GM12878 (cell line): ENCODE measurements at regions of chr11 and their contacts with region 1.

Region 1: DNA sequence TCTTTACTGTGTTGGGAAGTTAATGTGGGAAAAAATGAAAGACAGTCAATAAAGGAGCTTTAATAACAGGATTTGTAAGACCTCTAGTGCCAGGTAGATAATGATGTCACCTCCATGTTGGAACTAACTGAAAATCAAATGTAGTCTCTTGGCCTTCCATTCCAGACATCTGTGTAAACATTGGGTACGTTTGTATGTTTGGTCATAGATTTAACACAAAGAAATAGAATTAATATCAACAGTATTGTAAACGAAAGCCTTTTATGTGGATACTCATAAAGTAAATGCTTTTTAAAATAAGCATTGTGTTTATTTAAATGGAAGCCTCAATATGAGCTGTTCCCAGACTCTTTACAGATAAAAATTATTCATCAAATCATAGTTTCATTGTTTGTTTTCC is 605.7 kb downstream of the METTL15 start:
- DNase-seq: no peak
- ATAC-seq: no peak
- H3K4me3 ChIP-seq: no peak overlapping the region
- H3K27ac ChIP-seq: no peak overlapping the region
- H3K4me1 ChIP-seq: no peaks in the 10 kb centered on the region
- H3K27me3 ChIP-seq: no peaks in the 10 kb centered on the region
- CTCF ChIP-seq: no peak
- EP300 ChIP-seq: no peak
- POLR2A ChIP-seq: no peak
- RAD21 ChIP-seq: no peak

Region 2: DNA sequence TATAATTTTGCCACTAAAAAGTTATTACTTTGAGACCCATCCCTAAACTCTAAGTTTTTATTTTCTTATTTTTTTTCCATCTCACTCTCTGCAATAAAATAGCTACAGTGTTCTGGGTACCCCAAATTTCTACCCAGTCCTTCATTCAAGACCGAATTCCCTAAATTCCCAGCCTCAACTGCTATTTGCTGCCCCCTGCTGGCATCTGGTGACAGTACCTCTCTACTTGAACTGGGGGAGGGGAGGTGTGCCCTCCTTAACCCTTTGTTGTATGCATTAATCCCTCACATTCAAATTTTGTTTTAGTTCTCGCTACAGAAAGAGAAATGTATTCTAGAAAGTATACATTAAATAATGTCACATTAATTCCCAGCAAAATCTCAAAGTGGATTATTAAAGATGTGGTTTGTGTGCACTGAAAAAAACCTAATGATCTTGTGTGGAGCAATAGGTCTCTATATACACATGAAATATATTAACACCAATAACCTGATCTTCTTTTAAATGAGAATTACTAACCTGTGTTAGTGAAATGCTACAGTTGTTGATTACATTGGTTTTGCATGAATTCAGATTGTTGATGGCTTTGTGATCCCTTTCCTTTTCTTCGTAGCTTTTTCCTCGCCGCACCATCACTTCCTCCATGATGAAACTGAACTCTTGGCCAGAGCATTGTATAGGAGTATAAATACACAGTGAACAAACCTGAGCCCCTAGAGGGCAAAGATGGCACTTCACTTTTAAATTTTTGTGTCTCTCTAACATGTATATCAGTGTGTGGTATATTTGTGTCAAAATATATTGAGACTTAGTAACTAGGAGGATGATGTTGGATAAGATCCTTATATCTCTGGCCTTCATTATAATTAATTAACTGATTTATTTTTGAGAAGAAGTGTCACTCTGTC is 15.7 kb before region 1 on chr11:
- CTCF ChIA-PET with region 1: interaction called, 13 read pairs
- POLR2A ChIA-PET with region 1: no interaction called
- RAD21 ChIA-PET with region 1: no interaction called
- SMC1A ChIA-PET with region 1: no interaction called
- in situ Hi-C with region 1: no loop called
- intact Hi-C with region 1: no loop called
- DNase-seq: no peak
- ATAC-seq: peak; percentile 80
- H3K4me3 ChIP-seq: no peak overlapping the region
- H3K27ac ChIP-seq: no peak overlapping the region
- H3K4me1 ChIP-seq: no peaks in the 10 kb centered on the region
- H3K27me3 ChIP-seq: no peaks in the 10 kb centered on the region
- CTCF ChIP-seq: peak; percentile 78 to 85 (median 82)
- EP300 ChIP-seq: no peak
- POLR2A ChIP-seq: no peak
- RAD21 ChIP-seq: peak; percentile 72

Region 3: DNA sequence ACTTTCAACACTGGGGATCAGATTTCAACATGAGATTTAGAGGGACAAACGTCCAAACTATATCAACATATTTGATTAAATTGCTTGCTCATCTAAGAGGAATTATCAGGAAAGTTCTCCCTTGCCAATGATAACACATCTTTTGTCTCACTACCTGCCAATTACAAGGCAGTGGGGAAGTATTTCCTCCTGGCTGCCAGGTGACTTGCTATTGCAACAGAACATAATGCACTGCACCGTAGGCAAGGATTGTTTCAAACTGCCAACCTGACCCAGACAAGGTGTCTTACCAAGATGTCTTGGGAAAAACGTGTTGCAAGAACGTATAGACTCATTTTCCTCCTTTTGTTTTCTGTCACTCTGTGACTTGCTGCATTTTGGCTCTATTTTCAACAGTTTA is 105.9 kb after region 1 on chr11:
- CTCF ChIA-PET with region 1: no interaction called
- POLR2A ChIA-PET with region 1: no interaction called
- RAD21 ChIA-PET with region 1: no interaction called
- SMC1A ChIA-PET with region 1: no interaction called
- in situ Hi-C with region 1: no loop called
- intact Hi-C with region 1: no loop called
- DNase-seq: no peak
- ATAC-seq: no peak
- H3K4me3 ChIP-seq: no peak overlapping the region
- H3K27ac ChIP-seq: no peak overlapping the region
- H3K4me1 ChIP-seq: no peaks in the 10 kb centered on the region
- H3K27me3 ChIP-seq: no peaks in the 10 kb centered on the region
- CTCF ChIP-seq: no peak
- EP300 ChIP-seq: no peak
- POLR2A ChIP-seq: no peak
- RAD21 ChIP-seq: no peak

Region 4: DNA sequence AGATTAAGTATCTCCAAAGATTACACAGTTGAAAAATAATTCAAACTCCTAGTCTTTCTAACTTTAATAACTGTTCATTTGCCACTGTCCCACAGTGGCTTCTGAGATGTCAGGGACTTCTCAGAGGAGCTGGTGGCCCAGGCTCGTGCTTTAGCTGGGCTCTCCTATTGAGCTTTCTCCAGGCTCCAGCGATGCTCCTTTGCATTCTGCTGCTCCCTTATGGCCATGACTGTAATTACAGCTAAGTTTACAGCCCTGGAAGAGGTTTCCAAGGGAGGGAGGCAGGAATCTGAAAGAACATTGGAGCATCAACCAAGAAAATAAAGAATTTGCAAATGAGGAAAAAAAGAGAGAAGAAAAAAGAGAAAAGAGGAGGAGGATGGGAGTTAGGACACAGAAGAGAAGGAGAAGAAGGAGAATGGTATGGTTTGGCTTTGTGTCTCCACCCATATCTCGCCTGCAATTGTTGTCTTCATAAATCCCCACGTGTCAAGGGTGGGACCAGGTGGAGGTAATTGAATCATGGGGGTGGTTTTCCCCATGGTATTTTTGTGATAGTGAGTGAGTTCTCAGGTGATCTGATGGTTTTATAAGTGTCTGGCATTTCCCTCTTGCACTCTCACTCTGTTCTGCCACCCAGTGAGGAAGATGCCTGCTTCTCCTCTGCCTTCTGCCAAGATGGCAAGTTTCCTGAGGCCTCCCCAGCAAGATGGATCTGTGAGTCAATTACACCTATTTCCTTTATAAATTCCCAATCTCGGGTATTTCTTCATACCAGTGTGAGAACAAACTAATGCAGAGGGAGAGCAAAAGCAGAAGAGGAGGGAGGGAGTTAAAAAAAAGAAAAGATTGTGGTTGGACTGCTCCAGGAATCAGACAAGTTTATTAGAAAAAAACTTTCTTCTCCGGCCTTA is 446.0 kb after region 1 on chr11:
- CTCF ChIA-PET with region 1: no interaction called
- POLR2A ChIA-PET with region 1: no interaction called
- RAD21 ChIA-PET with region 1: no interaction called
- SMC1A ChIA-PET with region 1: no interaction called
- in situ Hi-C with region 1: no loop called
- intact Hi-C with region 1: loop called (anchors 10 kb)
- DNase-seq: no peak
- ATAC-seq: peak; percentile 98
- H3K4me3 ChIP-seq: no peak overlapping the region
- H3K27ac ChIP-seq: no peak overlapping the region
- H3K4me1 ChIP-seq: no peaks in the 10 kb centered on the region
- H3K27me3 ChIP-seq: no peaks in the 10 kb centered on the region
- CTCF ChIP-seq: peak; percentile 38 to 64 (median 52); a peak in 5 of 6 replicates
- EP300 ChIP-seq: no peak
- POLR2A ChIP-seq: no peak
- RAD21 ChIP-seq: peak; percentile 72

Region 5: GRCh38 chr11:29343465-29344333 is 629.8 kb after region 1 on chr11:
- CTCF ChIA-PET with region 1: no interaction called
- POLR2A ChIA-PET with region 1: no interaction called
- RAD21 ChIA-PET with region 1: no interaction called
- SMC1A ChIA-PET with region 1: no interaction called
- in situ Hi-C with region 1: no loop called
- intact Hi-C with region 1: no loop called
- DNase-seq: no peak
- ATAC-seq: peak; percentile 98
- H3K4me3 ChIP-seq: no peak overlapping the region
- H3K27ac ChIP-seq: no peak overlapping the region
- H3K4me1 ChIP-seq: no peaks in the 10 kb centered on the region
- H3K27me3 ChIP-seq: no peaks in the 10 kb centered on the region
- CTCF ChIP-seq: peak; percentile 88 to 98 (median 97)
- EP300 ChIP-seq: no peak
- POLR2A ChIP-seq: no peak
- RAD21 ChIP-seq: peak; percentile 61